ENCODE measurements at regions of chr20 and their contacts with region 1.

Region 1: DNA sequence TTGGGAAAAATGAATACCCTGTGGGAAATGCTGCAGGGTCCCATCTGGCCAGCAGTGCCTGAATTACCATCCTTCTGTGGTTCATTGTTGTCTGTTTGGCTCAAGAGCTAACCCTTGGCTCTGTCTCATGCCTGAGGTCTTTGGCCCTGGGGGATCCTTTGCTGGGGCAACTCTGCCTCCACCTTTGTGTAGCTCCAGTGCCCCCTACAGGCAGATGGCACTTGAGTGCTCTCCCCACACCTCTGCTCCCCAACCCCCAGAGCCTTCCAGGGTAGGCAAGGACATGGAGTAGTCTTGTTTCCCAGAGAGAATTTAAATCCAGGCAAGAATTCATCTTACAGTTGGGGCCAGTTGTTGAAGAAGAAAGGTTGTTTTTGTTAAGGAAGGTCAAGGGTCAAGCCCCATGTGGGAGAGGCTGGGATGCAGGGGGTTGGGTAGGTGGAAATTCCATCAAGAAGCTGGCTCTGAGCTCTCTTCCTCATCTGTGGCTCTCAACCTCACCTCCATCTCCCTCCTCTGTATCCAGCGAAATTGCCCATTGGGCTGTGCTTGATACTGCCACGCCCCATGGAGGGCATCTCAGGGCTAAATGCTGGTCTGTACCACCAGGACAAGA is 44.2 kb downstream of the ZNF831 start:
- DNase-seq: peak; percentile 91
- ATAC-seq: peak; percentile 97
- H3K4me3 Mint-ChIP-seq: no peak overlapping the region
- H3K27ac Mint-ChIP-seq: peak overlapping the region; percentile 74
- H3K4me1 Mint-ChIP-seq: peaks cover 32% of the 10 kb centered on the region
- H3K27me3 Mint-ChIP-seq: no peaks in the 10 kb centered on the region

Region 2: GRCh38 chr20:58870239-58871014 is 337.4 kb before region 1 on chr20:
- CTCF ChIA-PET with region 1: interaction called, 14 read pairs
- POLR2A ChIA-PET with region 1: no interaction called
- intact Hi-C with region 1: loop called (anchors 5 kb)
- DNase-seq: peak; percentile 73
- ATAC-seq: peak; percentile 75
- H3K4me3 Mint-ChIP-seq: no peak overlapping the region
- H3K27ac Mint-ChIP-seq: peak overlapping the region; percentile 27
- H3K4me1 Mint-ChIP-seq: peaks cover 11% of the 10 kb centered on the region
- H3K27me3 Mint-ChIP-seq: no peaks in the 10 kb centered on the region

Region 3: DNA sequence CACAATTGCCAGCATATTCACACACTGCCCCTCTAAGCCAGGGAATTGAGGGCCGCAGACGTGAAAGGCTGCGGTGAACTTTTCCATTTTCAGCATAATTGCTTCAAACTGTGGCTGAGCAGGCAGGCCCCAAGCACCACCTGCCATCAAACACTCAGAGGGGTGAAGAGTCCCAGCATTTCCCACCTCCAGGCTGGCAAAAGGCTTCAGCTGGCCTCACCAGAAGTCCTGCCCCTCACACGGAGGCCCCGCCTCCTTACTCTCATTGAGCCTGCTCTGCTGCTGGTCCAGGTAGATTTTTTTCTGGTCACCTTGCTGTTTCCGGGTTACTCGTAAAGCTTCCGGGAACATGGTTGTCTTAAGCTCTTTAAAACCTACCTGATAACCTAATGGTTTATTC is 113.3 kb before region 1 on chr20:
- CTCF ChIA-PET with region 1: interaction called, 131 read pairs
- POLR2A ChIA-PET with region 1: no interaction called
- intact Hi-C with region 1: no loop called
- DNase-seq: no peak
- ATAC-seq: no peak
- H3K4me3 Mint-ChIP-seq: no peak overlapping the region
- H3K27ac Mint-ChIP-seq: no peak overlapping the region
- H3K4me1 Mint-ChIP-seq: no peaks in the 10 kb centered on the region
- H3K27me3 Mint-ChIP-seq: no peaks in the 10 kb centered on the region

Region 4: DNA sequence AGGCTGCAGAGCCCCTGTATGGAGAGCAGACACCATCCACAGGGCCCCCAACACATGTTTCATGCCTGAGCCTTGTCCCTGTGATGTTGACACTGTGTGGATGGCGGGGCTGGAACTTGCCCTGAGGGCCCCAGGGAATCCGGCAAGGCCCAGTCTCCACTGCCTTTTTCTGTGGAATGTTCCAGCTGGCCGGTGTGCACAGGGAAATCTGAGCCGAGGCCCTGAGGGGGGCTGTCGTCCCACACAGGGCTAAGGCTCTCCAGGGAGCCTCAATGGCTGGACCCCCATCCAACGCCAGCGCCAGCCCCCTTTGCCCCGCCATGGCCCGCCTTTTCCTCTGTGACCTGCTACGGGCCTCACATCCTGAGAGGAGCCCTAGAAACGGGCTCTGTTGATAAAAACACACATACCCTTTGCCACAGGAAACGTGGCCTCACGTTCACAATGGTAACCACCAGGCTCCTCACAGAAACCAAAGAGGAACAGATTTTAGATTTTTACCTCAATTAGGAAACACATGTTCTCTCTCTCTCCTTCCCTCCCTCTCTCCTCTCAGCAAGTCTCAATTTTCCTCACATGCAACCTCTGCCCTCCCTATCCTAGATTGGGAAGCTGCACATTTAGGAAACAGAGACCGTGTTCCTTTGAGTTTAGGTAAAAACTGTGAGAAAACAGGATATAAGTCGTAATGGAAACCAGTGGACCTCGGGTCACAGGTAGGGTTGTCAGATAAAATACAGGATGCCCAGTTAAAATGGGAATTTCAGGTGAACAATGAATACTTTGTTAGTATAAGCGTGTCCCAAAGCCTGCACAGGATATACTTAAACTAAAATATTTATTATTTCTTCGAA is 58.0 kb before region 1 on chr20:
- CTCF ChIA-PET with region 1: interaction called, 11 read pairs
- POLR2A ChIA-PET with region 1: no interaction called
- intact Hi-C with region 1: no loop called
- DNase-seq: peak; percentile 82
- ATAC-seq: peak; percentile 42
- H3K4me3 Mint-ChIP-seq: peak overlapping the region; percentile 58
- H3K27ac Mint-ChIP-seq: peak overlapping the region; percentile 95
- H3K4me1 Mint-ChIP-seq: peaks cover 96% of the 10 kb centered on the region
- H3K27me3 Mint-ChIP-seq: no peaks in the 10 kb centered on the region

Region 5: GRCh38 chr20:59177261-59178250 is 30.3 kb before region 1 on chr20:
- CTCF ChIA-PET with region 1: interaction called, 11 read pairs
- POLR2A ChIA-PET with region 1: no interaction called
- intact Hi-C with region 1: no loop called
- DNase-seq: peak; percentile 69
- ATAC-seq: peak; percentile 88
- H3K4me3 Mint-ChIP-seq: peak overlapping the region; percentile 55
- H3K27ac Mint-ChIP-seq: peak overlapping the region; percentile 85
- H3K4me1 Mint-ChIP-seq: peaks cover 84% of the 10 kb centered on the region
- H3K27me3 Mint-ChIP-seq: no peaks in the 10 kb centered on the region

Region 6: DNA sequence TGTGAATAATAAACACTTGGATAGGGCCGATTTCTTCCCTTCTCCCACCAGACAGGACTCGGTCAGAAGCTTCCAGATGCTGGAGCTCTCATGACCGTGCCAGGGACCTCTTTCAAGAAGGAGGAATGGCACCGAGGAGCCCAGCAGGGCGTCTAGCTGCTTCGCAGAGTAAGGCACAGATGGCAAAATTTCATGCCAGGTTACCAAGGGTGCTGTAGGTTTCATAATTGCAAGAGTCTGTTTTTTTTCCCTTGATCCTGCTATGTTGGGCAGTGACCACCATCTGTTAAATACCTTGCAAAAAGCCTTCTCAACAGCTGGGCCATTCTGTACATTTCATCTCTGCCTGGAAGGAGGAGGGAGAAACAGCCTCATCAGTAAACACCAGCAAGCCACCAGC is 204.3 kb after region 1 on chr20:
- CTCF ChIA-PET with region 1: no interaction called
- POLR2A ChIA-PET with region 1: no interaction called
- intact Hi-C with region 1: no loop called
- DNase-seq: no peak
- ATAC-seq: no peak
- H3K4me3 Mint-ChIP-seq: no peak overlapping the region
- H3K27ac Mint-ChIP-seq: no peak overlapping the region
- H3K4me1 Mint-ChIP-seq: no peaks in the 10 kb centered on the region
- H3K27me3 Mint-ChIP-seq: peaks cover 4% of the 10 kb centered on the region

Region 7: DNA sequence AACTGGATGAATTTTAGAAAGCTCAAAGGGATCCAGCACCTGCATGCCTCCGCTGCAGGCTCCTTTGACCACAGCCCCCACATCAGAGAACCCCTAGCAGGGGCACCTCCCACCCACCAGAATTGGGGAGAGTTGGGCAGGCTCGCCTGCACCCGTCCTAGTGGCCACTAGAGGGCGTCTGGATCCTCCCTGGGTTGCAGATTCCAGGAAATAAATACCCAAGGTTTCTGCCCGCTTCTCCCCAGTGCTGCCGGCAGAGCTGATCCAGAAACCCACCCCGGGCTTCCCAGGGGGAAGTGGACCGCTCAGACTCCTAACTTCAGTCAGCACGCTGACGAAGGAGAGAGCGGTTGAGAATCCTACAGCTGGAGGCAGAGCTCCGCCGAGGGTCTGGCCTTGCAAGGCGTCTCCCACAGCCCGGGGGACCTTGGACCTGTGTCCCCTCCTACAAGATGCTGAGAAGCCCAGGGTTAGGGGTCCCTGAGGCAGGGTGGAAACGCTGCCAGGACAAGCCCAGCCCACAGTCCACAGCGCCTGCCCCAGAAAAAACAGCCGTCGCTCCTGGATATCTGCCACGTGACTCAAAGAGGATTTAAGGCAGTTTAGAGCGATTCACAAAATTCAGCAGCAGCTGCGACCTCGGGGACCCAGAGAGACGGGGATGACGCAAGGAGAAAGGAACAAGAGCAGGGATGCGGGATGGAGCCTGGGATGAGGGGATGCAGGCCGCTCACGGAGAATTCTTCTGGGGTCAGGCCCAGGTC is 363.9 kb after region 1 on chr20:
- CTCF ChIA-PET with region 1: no interaction called
- POLR2A ChIA-PET with region 1: no interaction called
- intact Hi-C with region 1: no loop called
- DNase-seq: peak; percentile 77
- ATAC-seq: peak; percentile 85
- H3K4me3 Mint-ChIP-seq: peak overlapping the region; percentile 44
- H3K27ac Mint-ChIP-seq: no peak overlapping the region
- H3K4me1 Mint-ChIP-seq: peaks cover 11% of the 10 kb centered on the region
- H3K27me3 Mint-ChIP-seq: peaks cover 33% of the 10 kb centered on the region

Measured in activated CD4-positive, alpha-beta T cell treated with anti-CD3 and anti-CD28 coated beads for 36 hours (primary cell).